Left cardiac atrium (tissue), 4 donors: ENCODE measurements at regions of chr5 and their contacts with region 1.

Region 1: GRCh38 chr5:1763548-1763911 is 36.1 kb downstream of the MRPL36 start:
- DNase-seq: no peak
- ATAC-seq: peak in 1 of 2 donors; percentile 71

Region 2: DNA sequence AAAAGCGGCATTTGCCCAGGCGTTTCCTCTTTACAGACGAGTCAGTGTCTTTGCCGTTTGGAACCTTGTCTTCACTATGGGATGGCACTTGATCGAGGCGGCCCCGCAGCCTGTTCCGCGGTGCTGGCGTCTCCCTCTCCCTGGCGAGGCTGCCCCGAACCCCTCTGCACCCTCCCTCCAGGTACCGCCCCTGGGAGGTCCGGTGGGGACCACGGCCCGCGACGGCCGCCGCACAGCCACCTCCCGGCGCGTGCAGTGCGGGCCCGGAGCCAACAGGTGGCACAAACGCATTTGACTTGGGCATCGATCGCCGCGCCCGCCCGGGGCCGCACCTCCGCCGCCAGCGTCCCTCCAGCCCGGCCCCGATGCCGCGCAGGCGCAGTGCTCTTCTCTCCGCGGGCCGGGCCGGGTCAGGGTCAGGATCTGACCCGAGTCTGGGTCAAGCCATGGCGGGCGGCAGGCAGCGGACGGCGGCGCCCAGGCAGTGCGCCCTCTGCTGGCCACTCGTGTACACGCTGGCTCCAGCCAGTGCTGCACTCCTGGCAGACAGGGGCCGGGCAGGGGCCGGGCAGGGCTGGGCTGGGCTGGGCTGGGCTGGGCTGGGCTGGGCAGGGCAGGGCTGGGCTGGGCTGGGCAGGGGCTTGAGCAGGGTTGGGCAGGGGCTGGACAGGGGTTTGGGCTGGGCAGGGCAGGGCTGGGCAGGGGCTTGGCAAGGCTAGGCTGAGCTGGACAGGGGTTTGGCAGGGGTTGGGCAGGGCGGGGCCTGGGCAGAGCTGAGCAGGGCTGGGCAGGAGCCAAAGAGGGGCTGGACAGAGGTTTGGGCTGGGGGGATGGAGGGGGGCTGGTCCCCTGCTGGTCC is 275.0 kb after region 1 on chr5:
- intact Hi-C with region 1: loop called in 1 of 2 experiments (anchors 5 kb)
- DNase-seq: peak; percentile 74
- ATAC-seq: peak; percentile 96 to 98

Region 3: GRCh38 chr5:2156358-2157059 is 393.0 kb after region 1 on chr5:
- intact Hi-C with region 1: loop called (anchors 10 kb)
- DNase-seq: no peak
- ATAC-seq: no peak